ENCODE measurements at regions of chr3 and their contacts with region 1.

Region 1: DNA sequence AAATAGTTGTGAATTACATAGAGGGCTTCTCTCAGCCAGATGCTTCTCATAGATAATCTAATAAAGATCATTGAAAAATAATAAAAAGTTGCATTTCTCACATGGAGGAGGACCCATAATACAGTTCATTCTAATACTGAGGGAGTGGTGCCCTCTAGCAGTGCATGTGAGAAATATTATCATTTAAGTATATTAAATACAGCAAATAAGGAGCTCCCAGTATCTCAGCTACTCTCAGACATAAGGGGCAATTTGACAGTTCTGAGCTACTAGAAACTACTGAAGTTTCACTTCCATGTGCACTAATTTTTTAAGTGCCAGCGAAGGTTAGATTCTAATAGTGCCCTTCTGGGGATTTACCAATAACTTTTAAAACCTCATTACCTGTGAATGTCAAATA is 188.3 kb downstream of the IL5RA start:
- DNase-seq: no peak
- H3K4me3 Mint-ChIP-seq: no peak overlapping the region
- H3K27ac Mint-ChIP-seq: no peak overlapping the region
- H3K4me1 Mint-ChIP-seq: no peaks in the 10 kb centered on the region
- H3K27me3 Mint-ChIP-seq: no peaks in the 10 kb centered on the region

Region 2: DNA sequence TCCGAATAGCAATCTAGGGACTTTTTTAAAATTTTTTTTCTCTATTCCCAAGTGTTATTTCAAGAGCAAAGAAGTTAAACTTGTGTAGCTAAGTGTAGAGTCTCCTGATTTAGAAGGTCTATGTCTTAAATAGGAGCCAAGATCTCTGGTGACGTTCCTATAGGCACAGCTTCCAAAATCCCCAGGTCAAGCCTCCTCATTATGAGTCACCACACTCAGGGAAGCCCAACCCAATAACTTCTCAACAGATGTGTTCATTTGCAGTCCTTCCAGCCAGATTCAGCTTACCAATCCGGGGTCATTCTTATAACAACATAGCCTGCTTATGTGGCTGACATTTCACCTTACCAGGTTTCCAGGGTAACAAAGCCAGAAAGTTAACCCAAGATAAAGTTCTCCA is 82.0 kb before region 1 on chr3:
- CTCF ChIA-PET with region 1: no interaction called
- POLR2A ChIA-PET with region 1: no interaction called
- intact Hi-C with region 1: no loop called
- DNase-seq: no peak
- H3K4me3 Mint-ChIP-seq: no peak overlapping the region
- H3K27ac Mint-ChIP-seq: no peak overlapping the region
- H3K4me1 Mint-ChIP-seq: no peaks in the 10 kb centered on the region
- H3K27me3 Mint-ChIP-seq: peaks cover 5% of the 10 kb centered on the region

Region 3: DNA sequence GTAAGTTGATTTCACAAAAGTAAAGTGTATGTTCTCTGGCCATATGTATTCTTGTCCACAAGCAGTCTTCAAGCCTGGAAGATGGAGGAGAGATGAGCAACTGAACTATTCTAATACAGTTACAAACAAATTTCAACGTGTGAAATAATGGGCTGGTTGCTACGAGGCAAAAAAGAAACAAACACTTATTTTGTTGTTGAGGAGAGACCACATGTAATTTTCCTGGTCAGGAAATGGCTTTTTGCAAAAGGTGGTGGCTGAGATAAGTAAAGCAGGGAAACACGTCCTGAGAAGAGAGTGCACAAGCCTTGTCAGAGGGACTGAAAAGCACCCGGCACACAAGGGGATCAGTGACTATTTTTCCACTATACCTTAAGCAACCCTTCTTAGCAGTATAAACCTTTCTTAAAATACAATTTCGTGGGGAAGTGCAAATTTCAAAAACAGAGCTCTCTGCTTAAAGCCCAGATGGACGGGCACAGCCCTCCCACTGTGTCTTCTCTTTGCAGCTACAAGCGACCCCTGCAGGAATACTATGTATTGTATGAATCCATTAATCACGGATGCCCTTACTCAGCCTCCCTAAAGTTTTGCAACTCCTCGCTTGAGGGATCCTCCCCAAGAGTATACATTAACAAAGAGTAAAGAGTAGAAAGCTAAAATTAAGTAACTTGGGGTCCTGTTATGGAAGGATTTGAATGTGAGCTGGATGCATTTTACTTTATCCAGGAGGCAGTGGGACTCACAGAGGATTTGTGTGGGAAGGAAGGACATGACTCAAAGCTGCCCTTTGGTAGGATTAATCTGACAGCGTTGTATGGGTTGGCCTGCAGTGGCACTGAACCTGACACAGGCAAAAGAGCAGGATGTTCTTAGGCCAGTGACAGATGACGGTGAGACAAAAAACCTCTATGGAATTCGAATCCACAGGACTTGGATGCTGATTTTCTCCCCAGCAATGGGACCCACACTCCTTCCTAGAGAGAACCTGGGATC is 65.5 kb before region 1 on chr3:
- CTCF ChIA-PET with region 1: no interaction called
- POLR2A ChIA-PET with region 1: no interaction called
- intact Hi-C with region 1: no loop called
- DNase-seq: no peak
- H3K4me3 Mint-ChIP-seq: no peak overlapping the region
- H3K27ac Mint-ChIP-seq: no peak overlapping the region
- H3K4me1 Mint-ChIP-seq: peaks cover 5% of the 10 kb centered on the region
- H3K27me3 Mint-ChIP-seq: no peaks in the 10 kb centered on the region

Region 4: DNA sequence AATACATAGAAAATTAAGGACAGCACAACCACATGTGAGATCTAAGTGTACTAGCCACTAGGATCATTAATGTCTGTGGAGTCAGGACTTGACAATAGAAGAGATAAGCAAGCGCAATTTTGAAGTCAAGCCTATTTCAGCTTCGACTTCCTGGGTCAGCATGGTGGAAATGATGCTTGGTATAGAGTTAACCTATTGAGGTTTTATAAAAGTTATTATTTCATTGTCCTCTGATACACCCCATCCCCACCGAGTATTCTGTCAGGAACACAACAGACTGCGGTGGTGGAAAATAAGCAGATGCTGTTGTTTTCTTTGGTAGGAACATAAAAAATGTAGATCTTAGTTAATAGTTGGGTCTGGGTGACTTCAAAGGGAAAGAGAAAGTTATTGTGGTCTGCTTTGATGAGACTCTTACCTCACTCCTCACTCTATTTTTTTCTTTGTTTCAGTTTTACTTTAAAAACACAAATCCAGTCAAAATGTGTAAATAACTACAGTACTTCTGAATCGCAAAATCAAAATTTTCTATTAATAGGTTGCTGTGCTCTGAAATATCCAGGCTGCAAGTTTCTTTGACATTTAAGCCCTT is 106.2 kb after region 1 on chr3:
- CTCF ChIA-PET with region 1: no interaction called
- POLR2A ChIA-PET with region 1: no interaction called
- intact Hi-C with region 1: no loop called
- DNase-seq: no peak
- H3K4me3 Mint-ChIP-seq: no peak overlapping the region
- H3K27ac Mint-ChIP-seq: no peak overlapping the region
- H3K4me1 Mint-ChIP-seq: peaks cover 12% of the 10 kb centered on the region
- H3K27me3 Mint-ChIP-seq: no peaks in the 10 kb centered on the region

Region 5: GRCh38 chr3:3170998-3171397 is 249.1 kb after region 1 on chr3:
- CTCF ChIA-PET with region 1: no interaction called
- POLR2A ChIA-PET with region 1: no interaction called
- intact Hi-C with region 1: loop called (anchors 5 kb)
- DNase-seq: no peak
- H3K4me3 Mint-ChIP-seq: no peak overlapping the region
- H3K27ac Mint-ChIP-seq: peak overlapping the region; percentile 93
- H3K4me1 Mint-ChIP-seq: peaks cover 62% of the 10 kb centered on the region
- H3K27me3 Mint-ChIP-seq: no peaks in the 10 kb centered on the region

Region 6: GRCh38 chr3:3893590-3893989 is 971.7 kb after region 1 on chr3:
- CTCF ChIA-PET with region 1: no interaction called
- POLR2A ChIA-PET with region 1: no interaction called
- intact Hi-C with region 1: no loop called
- DNase-seq: no peak
- H3K4me3 Mint-ChIP-seq: no peak overlapping the region
- H3K27ac Mint-ChIP-seq: no peak overlapping the region
- H3K4me1 Mint-ChIP-seq: no peaks in the 10 kb centered on the region
- H3K27me3 Mint-ChIP-seq: no peaks in the 10 kb centered on the region